Activated naive CD4-positive, alpha-beta T cell treated with anti-CD3 and anti-CD28 coated beads for 36 hours (primary cell): ENCODE measurements at regions of chr18 and their contacts with region 1.

Region 1: GRCh38 chr18:5456577-5457463 is 87.0 kb downstream of the EPB41L3 start:
- DNase-seq: peak; percentile 9
- H3K4me3 Mint-ChIP-seq: peak overlapping the region; percentile 55
- H3K27ac Mint-ChIP-seq: peak overlapping the region; percentile 83
- H3K4me1 Mint-ChIP-seq: peaks cover 6% of the 10 kb centered on the region
- H3K27me3 Mint-ChIP-seq: no peaks in the 10 kb centered on the region

Region 2: DNA sequence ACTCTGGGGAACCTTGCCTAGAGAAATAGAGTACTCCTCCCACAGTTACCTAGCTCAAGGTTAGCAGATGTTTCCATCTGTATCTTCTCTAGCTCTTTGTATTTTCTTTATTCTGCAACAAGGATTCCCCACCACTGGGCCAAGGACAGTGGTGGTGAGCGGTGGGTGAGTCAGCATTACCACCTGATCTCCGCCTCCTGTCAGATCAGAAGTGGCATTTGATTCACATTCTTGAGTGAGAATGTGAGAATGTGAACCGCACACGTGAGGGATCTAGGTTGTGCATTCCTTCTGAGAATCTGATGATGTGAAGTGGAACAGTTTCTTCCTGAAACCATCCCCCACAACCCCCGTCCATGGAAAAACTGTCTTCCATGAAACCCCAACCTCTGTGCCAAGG is 78.0 kb after region 1 on chr18:
- CTCF ChIA-PET with region 1: no interaction called
- intact Hi-C with region 1: loop called (anchors 1 kb)
- DNase-seq: peak; percentile 44
- H3K4me3 Mint-ChIP-seq: no peak overlapping the region
- H3K27ac Mint-ChIP-seq: no peak overlapping the region
- H3K4me1 Mint-ChIP-seq: peaks cover 6% of the 10 kb centered on the region
- H3K27me3 Mint-ChIP-seq: peaks cover 20% of the 10 kb centered on the region

Region 3: GRCh38 chr18:5546660-5547059 is 89.8 kb after region 1 on chr18:
- CTCF ChIA-PET with region 1: interaction called, 3 read pairs
- intact Hi-C with region 1: loop called (anchors 1 kb)
- DNase-seq: peak; percentile 11
- H3K4me3 Mint-ChIP-seq: no peak overlapping the region
- H3K27ac Mint-ChIP-seq: no peak overlapping the region
- H3K4me1 Mint-ChIP-seq: peaks cover 8% of the 10 kb centered on the region
- H3K27me3 Mint-ChIP-seq: peaks cover 36% of the 10 kb centered on the region

Region 4: GRCh38 chr18:5630057-5630899 is 173.5 kb after region 1 on chr18:
- CTCF ChIA-PET with region 1: no interaction called
- intact Hi-C with region 1: loop called (anchors 5 kb)
- DNase-seq: peak; percentile 56
- H3K4me3 Mint-ChIP-seq: peak overlapping the region; percentile 69
- H3K27ac Mint-ChIP-seq: no peak overlapping the region
- H3K4me1 Mint-ChIP-seq: no peaks in the 10 kb centered on the region
- H3K27me3 Mint-ChIP-seq: peaks cover 30% of the 10 kb centered on the region